ENCODE measurements at regions of chr5 and their contacts with region 1.

Region 1: DNA sequence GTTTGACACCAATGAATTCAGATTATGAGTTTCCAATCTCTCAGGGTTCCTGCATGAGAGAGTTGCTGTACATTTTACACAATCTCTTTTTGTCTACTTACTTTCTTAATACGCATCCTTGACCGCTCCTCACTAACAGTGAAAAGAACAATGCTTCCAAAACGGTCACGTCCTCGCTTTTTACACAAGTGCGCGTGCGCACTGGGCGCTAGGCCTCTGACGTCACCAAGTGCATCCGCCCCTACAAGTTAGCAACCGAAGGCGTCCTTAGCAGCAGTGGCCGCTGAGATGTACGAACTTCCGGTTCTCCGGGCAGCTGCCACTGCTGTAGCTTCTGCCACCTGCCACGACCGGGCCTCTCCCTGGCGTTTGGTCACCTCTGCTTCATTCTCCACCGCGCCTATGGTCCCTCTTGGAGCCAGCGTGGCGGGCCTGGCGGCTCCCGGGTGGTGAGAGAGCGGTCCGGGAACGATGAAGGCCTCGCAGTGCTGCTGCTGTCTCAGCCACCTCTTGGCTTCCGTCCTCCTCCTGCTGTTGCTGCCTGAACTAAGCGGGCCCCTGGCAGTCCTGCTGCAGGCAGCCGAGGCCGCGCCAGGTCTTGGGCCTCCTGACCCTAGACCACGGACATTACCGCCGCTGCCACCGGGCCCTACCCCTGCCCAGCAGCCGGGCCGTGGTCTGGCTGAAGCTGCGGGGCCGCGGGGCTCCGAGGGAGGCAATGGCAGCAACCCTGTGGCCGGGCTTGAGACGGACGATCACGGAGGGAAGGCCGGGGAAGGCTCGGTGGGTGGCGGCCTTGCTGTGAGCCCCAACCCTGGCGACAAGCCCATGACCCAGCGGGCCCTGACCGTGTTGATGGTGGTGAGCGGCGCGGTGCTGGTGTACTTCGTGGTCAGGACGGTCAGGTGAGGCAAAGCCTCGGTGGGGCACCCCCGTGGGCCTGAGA is at the start of gene FAM174A:
- DNase-seq: peak; percentile 92 to 96 (median 95)
- H3K4me3 ChIP-seq: peak within 1 kb of the TSS; percentile 68 to 81
- H3K4me3 Mint-ChIP-seq: peak within 1 kb of the TSS; percentile 93 to 100 (median 97)
- H3K27ac ChIP-seq: peak within 1 kb of the TSS; percentile 89
- H3K27ac Mint-ChIP-seq: peak within 1 kb of the TSS; percentile 92 to 99 (median 98)
- H3K4me1 ChIP-seq: peaks cover 24% of the 10 kb centered on the region
- H3K4me1 Mint-ChIP-seq: peaks cover 23 to 33% (median 26%) of the 10 kb centered on the region in 4 donors
- H3K27me3 ChIP-seq: no peaks in the 10 kb centered on the region
- H3K27me3 Mint-ChIP-seq: peaks cover 0 to under 1% of the 10 kb centered on the region in 2 donors
- total RNA-seq, gene FAM174A: 5.1 to 6.7 TPM

Region 2: DNA sequence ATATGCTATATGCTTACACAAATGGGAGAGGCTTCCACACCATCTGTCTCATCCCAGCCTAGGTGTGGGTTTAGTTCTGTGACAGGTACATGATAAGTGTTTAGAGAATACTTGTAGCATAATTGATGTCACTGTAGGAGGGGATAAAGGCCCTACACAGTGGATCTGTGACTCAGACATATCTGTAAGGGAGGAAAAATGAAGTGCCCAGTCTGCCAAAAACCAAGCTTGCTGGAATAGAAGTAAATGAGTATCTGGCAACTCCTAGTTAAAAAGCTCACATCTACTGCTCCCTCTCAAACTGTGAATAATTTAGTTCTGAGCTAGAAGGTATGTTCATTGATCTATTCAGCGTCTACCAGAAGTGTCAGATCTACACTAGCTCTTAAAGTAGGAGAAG is 39.0 kb before region 1 on chr5:
- CTCF ChIA-PET with region 1: no interaction called
- POLR2A ChIA-PET with region 1: no interaction called
- intact Hi-C with region 1: no loop called
- DNase-seq: no peak
- H3K4me3 ChIP-seq: no peak overlapping the region
- H3K4me3 Mint-ChIP-seq: no peak overlapping the region
- H3K27ac ChIP-seq: no peak overlapping the region
- H3K27ac Mint-ChIP-seq: no peak overlapping the region
- H3K4me1 ChIP-seq: no peaks in the 10 kb centered on the region
- H3K4me1 Mint-ChIP-seq: no peaks in the 10 kb centered on the region
- H3K27me3 ChIP-seq: no peaks in the 10 kb centered on the region
- H3K27me3 Mint-ChIP-seq: no peaks in the 10 kb centered on the region

Region 3: GRCh38 chr5:100667161-100667630 is 131.9 kb after region 1 on chr5:
- CTCF ChIA-PET with region 1: no interaction called
- POLR2A ChIA-PET with region 1: no interaction called
- intact Hi-C with region 1: loop called (anchors 5 kb)
- DNase-seq: peak in 4 of 5 donors; percentile 16 to 55 (median 38)
- H3K4me3 ChIP-seq: no peak overlapping the region
- H3K4me3 Mint-ChIP-seq: peak overlapping the region in 4 of 8 donors; percentile 4 to 27 (median 15)
- H3K27ac ChIP-seq: no peak overlapping the region
- H3K27ac Mint-ChIP-seq: peak overlapping the region in 4 of 7 donors; percentile 0 to 19 (median 11)
- H3K4me1 ChIP-seq: peaks cover 18% of the 10 kb centered on the region
- H3K4me1 Mint-ChIP-seq: peaks cover 10 to 18% (median 13%) of the 10 kb centered on the region in 4 donors
- H3K27me3 ChIP-seq: no peaks in the 10 kb centered on the region
- H3K27me3 Mint-ChIP-seq: no peaks in the 10 kb centered on the region

Region 4: GRCh38 chr5:100731768-100732167 is 196.4 kb after region 1 on chr5:
- CTCF ChIA-PET with region 1: no interaction called
- POLR2A ChIA-PET with region 1: no interaction called
- intact Hi-C with region 1: loop called (anchors 10 kb)
- DNase-seq: peak; percentile 38 to 66 (median 52)
- H3K4me3 ChIP-seq: peak overlapping the region in 1 of 2 donors; percentile 2
- H3K4me3 Mint-ChIP-seq: peak overlapping the region; percentile 76 to 91 (median 81)
- H3K27ac ChIP-seq: peak overlapping the region; percentile 7
- H3K27ac Mint-ChIP-seq: peak overlapping the region; percentile 70 to 93 (median 89)
- H3K4me1 ChIP-seq: peaks cover 13% of the 10 kb centered on the region
- H3K4me1 Mint-ChIP-seq: peaks cover 5 to 10% (median 8%) of the 10 kb centered on the region in 4 donors
- H3K27me3 ChIP-seq: no peaks in the 10 kb centered on the region
- H3K27me3 Mint-ChIP-seq: no peaks in the 10 kb centered on the region

Region 5: GRCh38 chr5:102296178-102296817 is 1761.0 kb after region 1 on chr5 and contains the start of gene SLCO4C1:
- CTCF ChIA-PET with region 1: no interaction called
- POLR2A ChIA-PET with region 1: no interaction called
- intact Hi-C with region 1: loop called (anchors 5 kb)
- DNase-seq: peak; percentile 55 to 73 (median 62)
- H3K4me3 ChIP-seq: peak within 1 kb of the TSS; percentile 54 to 69
- H3K4me3 Mint-ChIP-seq: peak within 1 kb of the TSS; percentile 86 to 91 (median 90)
- H3K27ac ChIP-seq: peak within 1 kb of the TSS; percentile 42
- H3K27ac Mint-ChIP-seq: peak within 1 kb of the TSS; percentile 16 to 90 (median 82)
- H3K4me1 ChIP-seq: peaks cover 18% of the 10 kb centered on the region
- H3K4me1 Mint-ChIP-seq: peaks cover 13 to 26% (median 21%) of the 10 kb centered on the region in 4 donors
- H3K27me3 ChIP-seq: no peaks in the 10 kb centered on the region
- H3K27me3 Mint-ChIP-seq: peaks cover 0 to 2% of the 10 kb centered on the region in 2 donors
- total RNA-seq, gene SLCO4C1: 0.23 to 0.30 TPM